RWPE1 (cell line): ENCODE measurements at regions of chr17 and their contacts with region 1.

Region 1: DNA sequence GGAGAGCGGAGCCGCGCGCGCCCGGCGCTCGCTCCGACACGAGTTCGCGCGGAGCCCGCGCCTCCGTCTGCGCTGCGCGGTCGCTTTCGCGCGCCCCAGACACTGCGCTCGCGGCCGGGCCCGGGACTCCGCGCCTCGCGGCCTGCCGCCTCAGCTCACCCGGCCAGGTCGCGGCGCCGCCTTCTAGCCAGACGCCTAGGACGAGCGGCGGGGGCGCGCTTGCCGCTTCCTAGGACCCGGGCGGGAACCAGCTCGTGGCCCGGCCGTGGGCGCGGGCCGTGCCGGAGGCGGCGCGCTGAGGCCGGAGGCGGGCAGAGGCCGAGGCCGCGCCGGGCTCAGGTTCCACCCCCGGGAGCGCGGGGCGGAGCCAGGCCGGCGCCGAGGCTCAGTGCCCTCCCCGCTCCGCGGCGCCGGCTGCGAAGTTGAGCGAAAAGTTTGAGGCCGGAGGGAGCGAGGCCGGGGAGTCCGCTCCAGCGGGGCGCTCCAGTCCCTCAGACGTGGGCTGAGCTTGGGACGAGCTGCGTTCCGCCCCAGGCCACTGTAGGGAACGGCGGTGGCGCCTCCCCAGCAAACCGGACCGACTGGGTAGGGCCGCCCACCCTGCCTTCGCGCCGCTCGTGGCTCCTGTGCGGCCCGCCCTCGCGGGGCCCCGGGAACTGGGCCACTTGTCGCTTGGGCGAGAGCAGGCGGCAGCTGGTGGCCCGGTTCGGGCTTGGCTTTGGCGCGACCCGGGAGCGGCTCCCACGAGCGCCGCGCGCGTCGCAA is at the start of gene SPHK1:
- DNase-seq: peak; percentile 88
- H3K27ac ChIP-seq: peak within 1 kb of the TSS; percentile 96
- CTCF ChIP-seq: no peak

Region 2: GRCh38 chr17:76353599-76354316 is 30.6 kb before region 1 on chr17 and contains the start of gene PRPSAP1:
- CTCF ChIA-PET with region 1: interaction called, 5 read pairs
- POLR2A ChIA-PET with region 1: interaction called, 12 read pairs
- DNase-seq: peak; percentile 90
- H3K27ac ChIP-seq: peak within 1 kb of the TSS; percentile 92
- CTCF ChIP-seq: no peak

Region 3: GRCh38 chr17:76365256-76365903 is 19.0 kb before region 1 on chr17:
- CTCF ChIA-PET with region 1: interaction called, 22 read pairs
- POLR2A ChIA-PET with region 1: interaction called, 12 read pairs
- DNase-seq: no peak
- H3K27ac ChIP-seq: 0 out of 2 replicates have a peak overlapping the region, but pooled peaks have one; percentile 17
- CTCF ChIP-seq: no peak; the same call in 1 of the 2 replicates

Region 4: GRCh38 chr17:76370261-76370993 is 14.0 kb before region 1 on chr17:
- CTCF ChIA-PET with region 1: interaction called, 22 read pairs
- POLR2A ChIA-PET with region 1: interaction called, 12 read pairs
- DNase-seq: peak; percentile 79
- H3K27ac ChIP-seq: peak overlapping the region; percentile 95
- CTCF ChIP-seq: peak; percentile 94

Region 5: DNA sequence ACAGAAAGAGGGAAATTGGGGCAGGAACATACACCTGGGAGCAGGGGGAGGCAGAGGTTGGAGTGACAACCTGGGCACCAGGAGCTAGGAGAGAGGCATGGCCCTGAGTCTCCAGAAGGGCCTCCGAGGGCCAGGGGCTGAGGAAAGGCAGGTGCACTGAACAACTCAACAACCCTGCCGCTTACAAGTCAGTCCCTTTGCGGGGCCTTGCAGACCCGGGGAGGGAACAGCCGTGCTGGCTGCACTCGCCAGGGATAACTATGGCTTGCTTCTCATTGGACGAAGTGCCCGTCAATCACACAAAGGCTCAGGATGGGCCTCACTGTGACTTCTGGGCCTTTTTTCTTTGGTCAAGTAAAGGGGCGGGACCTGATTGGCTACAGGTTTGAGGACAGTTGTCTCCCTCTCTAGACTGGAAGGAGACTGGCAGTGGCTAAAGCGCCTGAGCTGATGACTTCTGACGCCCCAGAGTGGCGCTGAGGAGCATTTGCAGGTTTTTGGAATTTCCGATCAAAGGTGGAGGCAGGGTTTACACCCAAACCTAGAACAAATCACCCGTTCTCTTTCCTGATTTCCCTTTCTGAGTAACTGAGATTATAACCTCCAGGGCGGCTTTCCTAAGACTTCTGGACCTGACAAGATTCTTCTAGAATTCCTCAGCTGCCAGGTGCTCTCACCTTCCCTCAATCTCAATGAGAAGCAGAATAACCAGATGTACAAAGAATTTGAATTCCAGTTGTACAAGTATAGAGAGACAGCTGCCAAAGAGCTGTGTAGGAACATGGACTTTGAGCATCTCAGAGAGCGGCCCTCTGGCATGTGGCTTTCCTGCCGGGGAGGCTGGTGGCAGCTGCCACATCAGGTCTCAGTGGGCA is 228.8 kb after region 1 on chr17:
- CTCF ChIA-PET with region 1: no interaction called
- POLR2A ChIA-PET with region 1: no interaction called
- DNase-seq: no peak
- H3K27ac ChIP-seq: no peak overlapping the region
- CTCF ChIP-seq: no peak